Heart right ventricle (tissue), 16 donors: ENCODE measurements at regions of chr22 and their contacts with region 1.

Region 1: GRCh38 chr22:31676700-31677099 is 14.7 kb upstream of the PISD start:
- DNase-seq: peak; percentile 94
- ATAC-seq: peak; percentile 98 to 100 (median 99)
- H3K4me3 ChIP-seq: peak overlapping the region; percentile 25 to 61 (median 53)
- H3K27ac ChIP-seq: peak overlapping the region in 8 of 10 donors; percentile 11 to 88 (median 57)
- H3K4me1 ChIP-seq: peaks cover 0 to 33% (median 7%) of the 10 kb centered on the region in 9 donors
- H3K27me3 ChIP-seq: no peaks in the 10 kb centered on the region
- CTCF ChIP-seq: no peak

Region 2: DNA sequence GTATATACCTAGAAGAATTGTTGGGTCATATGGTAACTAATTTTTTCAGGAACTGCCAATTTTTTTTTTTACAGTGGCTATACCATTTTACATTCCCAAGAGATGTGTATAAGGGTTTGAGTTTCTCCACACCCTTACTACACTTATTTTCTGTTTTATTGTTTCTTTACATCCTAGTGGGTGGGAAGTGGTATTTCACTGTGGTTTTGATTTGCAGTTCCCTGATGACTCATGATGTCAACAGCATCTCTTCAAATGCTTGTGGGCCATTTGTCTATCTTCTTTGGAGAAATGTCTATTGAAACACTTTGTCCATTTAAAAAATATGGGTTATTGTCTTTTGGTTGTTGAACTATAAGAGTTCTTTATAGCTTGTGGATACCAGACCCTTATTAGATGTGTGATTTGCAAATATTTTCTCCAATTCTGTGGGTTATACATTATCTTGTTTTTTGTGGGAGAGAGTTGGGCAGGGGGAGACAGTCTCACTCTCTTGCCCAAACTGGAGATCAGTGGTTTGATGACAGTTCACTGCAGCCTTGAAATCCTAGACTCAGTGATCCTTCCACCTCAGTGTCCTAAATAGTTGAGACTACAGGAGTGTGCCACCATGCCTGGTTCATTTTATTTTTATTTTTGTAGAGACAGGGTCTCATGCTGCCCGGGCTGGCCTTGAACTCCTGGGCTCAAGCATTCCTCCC is 15.6 kb after region 1 on chr22:
- intact Hi-C with region 1: loop called in 1 of 10 experiments (anchors 1 kb)
- DNase-seq: no peak
- ATAC-seq: no peak
- H3K4me3 ChIP-seq: no peak overlapping the region
- H3K27ac ChIP-seq: peak overlapping the region in 1 of 10 donors; percentile 23
- H3K4me1 ChIP-seq: peaks cover 0 to 12% (median 0%) of the 10 kb centered on the region in 9 donors
- H3K27me3 ChIP-seq: no peaks in the 10 kb centered on the region
- CTCF ChIP-seq: no peak